ENCODE measurements at regions of chr6 and their contacts with region 1.

Region 1: DNA sequence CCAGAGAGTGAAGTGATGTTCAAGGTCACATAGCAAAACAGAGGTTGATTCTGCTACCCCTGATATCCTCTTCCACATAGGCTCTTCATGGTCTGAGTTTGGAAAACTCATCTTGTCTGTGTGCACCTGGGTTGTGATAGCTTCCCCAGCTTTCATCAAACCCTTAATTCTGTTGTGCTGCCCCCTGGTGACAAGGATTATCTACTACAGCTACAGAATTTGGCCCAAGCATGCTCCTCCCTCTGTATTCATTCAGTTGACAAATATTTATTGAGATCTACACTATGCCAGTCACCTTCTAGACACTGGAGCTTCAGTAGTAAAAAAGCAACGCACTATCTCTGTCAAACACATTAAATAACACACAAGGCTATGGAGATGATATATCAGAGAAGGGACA is 50.4 kb downstream of the SMPDL3A start:
- DNase-seq: peak; percentile 62
- H3K4me3 Mint-ChIP-seq: no peak overlapping the region
- H3K27ac Mint-ChIP-seq: no peak overlapping the region
- H3K4me1 Mint-ChIP-seq: no peaks in the 10 kb centered on the region
- H3K27me3 Mint-ChIP-seq: peaks cover 9% of the 10 kb centered on the region

Region 2: GRCh38 chr6:122491919-122492555 is 347.4 kb before region 1 on chr6:
- CTCF ChIA-PET with region 1: interaction called, 11 read pairs
- DNase-seq: peak; percentile 83
- H3K4me3 Mint-ChIP-seq: no peak overlapping the region
- H3K27ac Mint-ChIP-seq: no peak overlapping the region
- H3K4me1 Mint-ChIP-seq: peaks cover 20% of the 10 kb centered on the region
- H3K27me3 Mint-ChIP-seq: peaks cover 12% of the 10 kb centered on the region

Region 3: GRCh38 chr6:122730775-122731386 is 108.6 kb before region 1 on chr6:
- CTCF ChIA-PET with region 1: interaction called, 56 read pairs
- DNase-seq: peak; percentile 39
- H3K4me3 Mint-ChIP-seq: no peak overlapping the region
- H3K27ac Mint-ChIP-seq: no peak overlapping the region
- H3K4me1 Mint-ChIP-seq: no peaks in the 10 kb centered on the region
- H3K27me3 Mint-ChIP-seq: peaks cover 9% of the 10 kb centered on the region

Region 4: GRCh38 chr6:122749451-122750050 is 89.9 kb before region 1 on chr6:
- CTCF ChIA-PET with region 1: interaction called, 25 read pairs
- DNase-seq: no peak
- H3K4me3 Mint-ChIP-seq: no peak overlapping the region
- H3K27ac Mint-ChIP-seq: no peak overlapping the region
- H3K4me1 Mint-ChIP-seq: peaks cover 25% of the 10 kb centered on the region
- H3K27me3 Mint-ChIP-seq: no peaks in the 10 kb centered on the region

Region 5: DNA sequence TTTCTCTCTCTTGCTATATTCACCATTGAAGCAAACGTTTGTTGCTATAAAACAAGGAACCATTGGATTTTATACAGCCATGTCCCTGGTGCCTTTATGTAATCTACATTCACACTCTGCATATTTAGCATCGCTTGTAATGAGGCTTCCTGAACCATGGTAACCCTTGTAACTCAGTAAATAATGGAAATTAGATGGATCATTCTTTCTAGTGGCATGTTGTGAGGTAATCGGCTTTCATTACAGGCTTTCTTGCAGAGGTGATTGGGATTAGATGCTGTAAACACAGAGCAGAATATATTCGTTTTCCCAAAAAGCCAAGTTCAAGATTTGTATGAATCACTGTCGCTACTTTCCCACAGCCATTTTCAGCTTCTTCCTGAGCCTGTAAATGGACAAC is 14.3 kb before region 1 on chr6:
- CTCF ChIA-PET with region 1: no interaction called
- DNase-seq: no peak
- H3K4me3 Mint-ChIP-seq: no peak overlapping the region
- H3K27ac Mint-ChIP-seq: no peak overlapping the region
- H3K4me1 Mint-ChIP-seq: no peaks in the 10 kb centered on the region
- H3K27me3 Mint-ChIP-seq: peaks cover 4% of the 10 kb centered on the region

Region 6: DNA sequence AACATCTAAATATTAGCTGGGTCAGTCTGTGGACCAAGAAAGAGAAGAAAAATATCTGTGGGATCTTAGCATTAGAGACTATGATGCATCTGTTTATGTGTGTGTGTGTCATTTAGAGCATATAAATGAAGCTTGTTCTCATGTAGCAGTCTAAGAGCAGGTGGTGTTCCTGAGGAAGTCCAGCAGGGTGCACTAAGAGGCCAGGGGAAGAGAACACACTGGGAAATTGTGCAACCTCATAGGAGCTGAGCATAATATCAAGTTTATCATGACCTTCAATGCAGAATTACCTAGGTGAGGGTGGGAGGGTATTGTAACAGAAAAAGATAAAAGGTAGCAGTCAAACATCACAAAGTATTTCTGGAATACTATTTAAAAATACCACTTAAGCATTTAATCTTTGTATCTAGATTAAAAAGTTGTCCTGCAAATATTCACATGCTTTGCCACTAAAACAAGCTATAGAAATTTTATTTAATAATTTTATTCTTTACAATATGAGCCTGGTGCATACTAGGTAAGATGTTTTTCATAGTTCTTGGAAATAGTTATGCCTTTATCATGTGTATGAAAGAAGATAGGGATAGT is 30.1 kb after region 1 on chr6:
- CTCF ChIA-PET with region 1: interaction called, 10 read pairs
- DNase-seq: no peak
- H3K4me3 Mint-ChIP-seq: no peak overlapping the region
- H3K27ac Mint-ChIP-seq: no peak overlapping the region
- H3K4me1 Mint-ChIP-seq: no peaks in the 10 kb centered on the region
- H3K27me3 Mint-ChIP-seq: no peaks in the 10 kb centered on the region

Region 7: GRCh38 chr6:122903266-122903915 is 63.9 kb after region 1 on chr6:
- CTCF ChIA-PET with region 1: no interaction called
- DNase-seq: no peak
- H3K4me3 Mint-ChIP-seq: no peak overlapping the region
- H3K27ac Mint-ChIP-seq: no peak overlapping the region
- H3K4me1 Mint-ChIP-seq: no peaks in the 10 kb centered on the region
- H3K27me3 Mint-ChIP-seq: no peaks in the 10 kb centered on the region

Measured in activated naive CD4-positive, alpha-beta T cell treated with anti-CD3 and anti-CD28 coated beads, Interleukin-2, amount 10 ng/mL, durations not matched to agents 7 days and 5 days (primary cell).